ENCODE measurements at regions of chr14 and their contacts with region 1.

Region 1: DNA sequence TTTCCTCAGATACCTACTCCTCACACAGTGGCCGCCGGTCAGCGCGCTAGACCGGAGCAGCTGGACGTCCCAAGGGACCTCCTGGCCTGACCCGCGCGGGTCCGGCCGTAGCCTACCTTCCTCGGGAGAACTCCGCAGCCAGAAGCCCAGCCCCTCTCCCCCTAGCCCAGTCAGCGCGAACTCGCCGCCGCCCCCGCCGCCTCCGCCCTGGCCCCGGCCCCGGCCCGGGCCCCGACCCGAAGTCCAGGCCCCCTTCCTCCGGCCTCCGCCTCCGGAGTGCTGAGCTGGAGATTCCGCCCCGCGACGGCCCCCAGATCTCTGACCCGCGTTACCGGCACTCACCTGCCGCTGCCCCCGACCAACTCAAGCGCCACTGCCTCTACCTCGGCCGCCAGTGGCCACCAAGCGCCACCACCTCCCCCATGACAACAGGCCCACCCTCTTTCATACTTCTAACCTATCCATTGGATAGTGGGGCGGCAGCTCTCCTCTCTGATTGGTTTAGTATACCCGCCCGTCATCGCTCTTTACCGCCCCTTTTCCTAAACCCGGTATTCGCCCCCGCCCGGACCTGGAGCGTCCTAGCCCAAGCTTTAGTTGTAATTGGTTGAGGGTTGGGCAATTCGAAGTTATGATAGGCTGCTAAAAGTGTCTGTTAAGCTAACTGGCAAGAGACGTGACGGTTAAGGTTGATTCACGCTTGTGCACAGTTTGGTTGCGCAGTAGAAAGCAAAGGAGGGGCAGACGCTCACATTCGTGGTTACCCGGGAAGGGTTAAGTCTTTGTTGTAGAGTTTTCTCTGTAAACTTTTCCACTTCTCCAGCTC is at the start of gene NUMB:
- H3K4me3 ChIP-seq: peak within 1 kb of the TSS; percentile 97
- H3K27ac ChIP-seq: peak within 1 kb of the TSS; percentile 80
- H3K4me1 ChIP-seq: peaks cover 36% of the 10 kb centered on the region
- CTCF ChIP-seq: no peak; the same call in 1 of the 2 replicates

Region 2: DNA sequence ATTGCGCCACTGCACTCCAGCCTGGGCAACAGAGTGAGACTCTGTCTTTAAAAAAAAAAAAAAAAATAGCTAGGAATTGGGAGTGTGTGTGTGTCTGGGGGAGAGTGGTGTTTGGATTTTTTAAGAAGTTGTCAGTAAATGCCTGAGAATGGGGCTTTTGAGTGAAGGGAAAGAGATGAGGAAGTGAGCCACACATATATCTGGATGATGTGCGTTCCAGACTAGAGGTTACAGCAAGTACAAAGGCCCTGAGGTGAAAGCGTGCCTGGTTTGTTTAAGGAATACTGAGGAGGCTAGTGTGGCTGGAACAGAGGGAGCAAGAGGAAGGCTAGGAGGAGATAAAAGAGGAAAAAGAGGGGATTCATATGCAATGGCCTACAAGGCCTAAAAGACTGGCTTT is 151.1 kb before region 1 on chr14:
- CTCF ChIA-PET with region 1: no interaction called
- POLR2A ChIA-PET with region 1: no interaction called
- H3K4me3 ChIP-seq: no peak overlapping the region
- H3K27ac ChIP-seq: no peak overlapping the region
- H3K4me1 ChIP-seq: peaks cover 11% of the 10 kb centered on the region
- CTCF ChIP-seq: no peak

Region 3: DNA sequence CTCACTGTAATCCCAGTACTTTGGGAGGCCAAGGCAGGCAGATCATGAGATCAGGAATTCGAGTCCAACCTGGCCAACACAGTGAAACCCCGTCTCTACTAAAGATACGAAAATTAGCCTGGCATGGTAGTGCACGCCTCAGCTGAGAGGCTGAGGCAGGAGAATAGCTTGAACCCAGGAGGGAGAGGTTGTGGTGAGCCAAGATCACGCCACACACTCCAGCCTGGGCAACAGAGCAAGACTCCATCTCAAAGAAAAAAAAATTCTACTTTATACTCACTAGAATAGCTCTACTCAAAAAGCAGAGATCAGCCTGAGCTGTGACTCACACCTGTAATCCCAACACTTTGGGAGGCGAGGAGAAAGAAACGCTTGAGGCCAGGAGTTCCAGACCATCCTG is 17.1 kb before region 1 on chr14:
- CTCF ChIA-PET with region 1: interaction called, 5 read pairs
- POLR2A ChIA-PET with region 1: interaction called, 12 read pairs
- H3K4me3 ChIP-seq: no peak overlapping the region
- H3K27ac ChIP-seq: no peak overlapping the region
- H3K4me1 ChIP-seq: peaks cover 8% of the 10 kb centered on the region; the same call in 1 of the 2 replicates
- CTCF ChIP-seq: no peak

Region 4: GRCh38 chr14:73870525-73871235 is 412.3 kb after region 1 on chr14:
- CTCF ChIA-PET with region 1: no interaction called
- POLR2A ChIA-PET with region 1: no interaction called
- H3K4me3 ChIP-seq: no peak overlapping the region
- H3K27ac ChIP-seq: no peak overlapping the region
- H3K4me1 ChIP-seq: no peaks in the 10 kb centered on the region
- CTCF ChIP-seq: no peak